PC-9 (cell line): ENCODE measurements at regions of chr11 and their contacts with region 1.

Region 1: GRCh38 chr11:31487848-31488247 is 21.6 kb downstream of the IMMP1L start:
- DNase-seq: peak in 1 of 2 experiments; percentile 49
- H3K4me3 ChIP-seq: no peak overlapping the region
- H3K27ac ChIP-seq: no peak overlapping the region
- H3K4me1 ChIP-seq: no peaks in the 10 kb centered on the region
- H3K27me3 ChIP-seq: no peaks in the 10 kb centered on the region
- CTCF ChIP-seq: peak; percentile 70

Region 2: DNA sequence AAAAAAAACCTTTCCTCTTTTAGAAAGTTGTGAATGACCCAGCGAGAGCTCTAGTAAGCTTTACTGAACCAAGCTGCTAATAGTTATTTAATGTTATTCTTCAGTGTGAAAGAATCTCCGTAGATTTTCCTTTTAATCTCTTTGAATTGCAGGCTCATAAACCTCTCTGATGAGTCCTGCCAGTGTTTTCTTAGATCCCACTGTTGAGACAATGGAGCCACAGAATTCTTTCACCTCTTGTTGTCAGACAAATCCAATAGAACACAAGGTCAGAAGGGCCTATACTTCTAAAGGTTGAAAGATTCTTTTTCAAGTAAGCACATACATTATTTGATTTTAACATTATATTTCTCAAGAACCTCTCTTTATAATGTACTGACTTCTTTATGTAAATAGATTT is 66.0 kb before region 1 on chr11:
- CTCF ChIA-PET with region 1: no interaction called
- POLR2A ChIA-PET with region 1: no interaction called
- intact Hi-C with region 1: no loop called
- DNase-seq: no peak
- H3K4me3 ChIP-seq: no peak overlapping the region
- H3K27ac ChIP-seq: no peak overlapping the region
- H3K4me1 ChIP-seq: no peaks in the 10 kb centered on the region
- H3K27me3 ChIP-seq: no peaks in the 10 kb centered on the region
- CTCF ChIP-seq: no peak

Region 3: GRCh38 chr11:31509429-31510345 is 21.8 kb after region 1 on chr11 and contains the starts of genes ELP4 and IMMP1L:
- CTCF ChIA-PET with region 1: no interaction called
- POLR2A ChIA-PET with region 1: interaction called, 12 read pairs
- intact Hi-C with region 1: no loop called
- DNase-seq: peak; percentile 95 to 96
- H3K4me3 ChIP-seq: peak within 1 kb of the TSS; percentile 86
- H3K27ac ChIP-seq: peak within 1 kb of the TSS; percentile 41
- H3K4me1 ChIP-seq: peaks cover 32% of the 10 kb centered on the region
- H3K27me3 ChIP-seq: no peaks in the 10 kb centered on the region
- CTCF ChIP-seq: no peak
- total RNA-seq, gene ELP4: 15.1 and 20.5 TPM in 2 replicates
- total RNA-seq, gene IMMP1L: 37.8 and 41.9 TPM in 2 replicates

Region 4: GRCh38 chr11:31870609-31871309 is 382.9 kb after region 1 on chr11:
- CTCF ChIA-PET with region 1: no interaction called
- POLR2A ChIA-PET with region 1: no interaction called
- intact Hi-C with region 1: loop called (anchors 5 kb)
- DNase-seq: peak; percentile 48 to 50
- H3K4me3 ChIP-seq: no peak overlapping the region
- H3K27ac ChIP-seq: peak overlapping the region; percentile 93
- H3K4me1 ChIP-seq: peaks cover 84% of the 10 kb centered on the region
- H3K27me3 ChIP-seq: no peaks in the 10 kb centered on the region
- CTCF ChIP-seq: peak; percentile 71

Region 5: DNA sequence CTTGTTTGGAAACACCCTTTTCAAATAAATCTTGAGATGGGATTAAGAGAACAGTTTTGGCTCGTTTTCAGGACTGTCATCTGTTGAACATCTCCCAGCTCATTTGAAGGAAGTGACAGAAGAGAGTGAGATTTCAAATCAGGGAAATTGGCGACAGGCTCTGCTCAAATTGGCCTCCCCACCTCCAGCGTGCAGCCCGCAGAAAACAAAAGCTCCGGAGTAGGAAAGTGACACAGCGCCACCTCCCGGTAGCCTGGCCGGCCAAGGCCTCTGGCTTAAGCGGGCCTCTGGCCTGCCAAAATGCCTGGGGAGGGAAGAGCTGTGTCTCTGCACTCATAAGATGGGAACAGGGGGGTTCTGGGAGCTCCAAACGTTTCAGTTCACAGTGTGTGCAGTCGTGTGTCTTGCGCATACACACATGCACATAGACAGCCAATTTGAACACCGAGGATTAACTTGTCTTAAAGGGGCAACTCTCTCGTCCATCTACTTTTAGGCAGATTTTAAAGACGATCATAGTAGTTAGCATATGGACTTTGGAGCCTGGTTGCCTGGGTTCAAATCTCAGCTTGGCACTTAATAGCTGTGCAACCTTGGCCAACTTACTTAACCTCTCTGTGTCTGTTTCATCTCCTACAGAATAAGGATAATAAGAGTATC is 470.4 kb after region 1 on chr11:
- CTCF ChIA-PET with region 1: no interaction called
- POLR2A ChIA-PET with region 1: no interaction called
- intact Hi-C with region 1: loop called (anchors 5 kb)
- DNase-seq: peak; percentile 61 to 70
- H3K4me3 ChIP-seq: no peak overlapping the region
- H3K27ac ChIP-seq: no peak overlapping the region
- H3K4me1 ChIP-seq: peaks cover 16% of the 10 kb centered on the region
- H3K27me3 ChIP-seq: no peaks in the 10 kb centered on the region
- CTCF ChIP-seq: peak; percentile 97

Region 6: GRCh38 chr11:32006799-32007388 is 519.0 kb after region 1 on chr11:
- CTCF ChIA-PET with region 1: no interaction called
- POLR2A ChIA-PET with region 1: no interaction called
- intact Hi-C with region 1: loop called (anchors 10 kb)
- DNase-seq: peak; percentile 25 to 45
- H3K4me3 ChIP-seq: no peak overlapping the region
- H3K27ac ChIP-seq: no peak overlapping the region
- H3K4me1 ChIP-seq: no peaks in the 10 kb centered on the region
- H3K27me3 ChIP-seq: peaks cover 30% of the 10 kb centered on the region
- CTCF ChIP-seq: peak; percentile 82